Activated T-helper 2 cell treated with anti-CD3 and anti-CD28 coated beads, Interferon-gamma antibody, Interleukin-2, Interleukin-4, amounts not matched to agents 10 μg/mL and 5 μg/mL and 100 μg/mL, durations not matched to agents 14 hours and 24 hours and 36 hours (primary cell): ENCODE measurements at regions of chr1 and their contacts with region 1.

Region 1: GRCh38 chr1:209747580-209748262 is 8.1 kb upstream of the TRAF3IP3 start:
- DNase-seq: peak; percentile 79
- H3K4me3 Mint-ChIP-seq: peak overlapping the region; percentile 72
- H3K27ac Mint-ChIP-seq: peak overlapping the region; percentile 92
- H3K4me1 Mint-ChIP-seq: peaks cover 68% of the 10 kb centered on the region
- H3K27me3 Mint-ChIP-seq: no peaks in the 10 kb centered on the region

Region 2: DNA sequence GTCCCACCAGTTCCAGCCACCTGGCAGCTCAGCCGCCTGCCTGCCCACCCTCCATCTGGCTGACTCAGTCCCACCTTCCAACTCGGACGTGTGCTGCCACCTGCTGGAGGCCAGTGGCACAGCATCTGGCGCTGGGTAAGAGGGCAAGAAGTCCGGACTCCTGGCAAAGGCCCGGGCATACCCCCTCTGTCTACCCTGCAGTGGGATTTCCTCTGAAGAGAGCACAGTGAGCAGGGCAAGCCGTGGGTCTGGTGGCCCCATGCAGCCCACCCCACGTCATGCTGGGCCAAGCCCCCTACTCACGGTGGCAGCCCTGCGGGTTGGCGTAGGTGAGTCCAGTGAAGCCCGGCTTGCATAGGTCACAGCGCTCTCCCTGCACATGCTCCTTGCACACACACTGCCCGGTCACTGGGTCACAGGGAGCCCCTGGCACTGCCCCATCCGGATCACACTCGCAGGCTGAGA is 120.0 kb before region 1 on chr1:
- intact Hi-C with region 1: loop called (anchors 1 kb)
- DNase-seq: peak; percentile 63
- H3K4me3 Mint-ChIP-seq: no peak overlapping the region
- H3K27ac Mint-ChIP-seq: no peak overlapping the region
- H3K4me1 Mint-ChIP-seq: peaks cover 4% of the 10 kb centered on the region
- H3K27me3 Mint-ChIP-seq: peaks cover 2% of the 10 kb centered on the region

Region 3: DNA sequence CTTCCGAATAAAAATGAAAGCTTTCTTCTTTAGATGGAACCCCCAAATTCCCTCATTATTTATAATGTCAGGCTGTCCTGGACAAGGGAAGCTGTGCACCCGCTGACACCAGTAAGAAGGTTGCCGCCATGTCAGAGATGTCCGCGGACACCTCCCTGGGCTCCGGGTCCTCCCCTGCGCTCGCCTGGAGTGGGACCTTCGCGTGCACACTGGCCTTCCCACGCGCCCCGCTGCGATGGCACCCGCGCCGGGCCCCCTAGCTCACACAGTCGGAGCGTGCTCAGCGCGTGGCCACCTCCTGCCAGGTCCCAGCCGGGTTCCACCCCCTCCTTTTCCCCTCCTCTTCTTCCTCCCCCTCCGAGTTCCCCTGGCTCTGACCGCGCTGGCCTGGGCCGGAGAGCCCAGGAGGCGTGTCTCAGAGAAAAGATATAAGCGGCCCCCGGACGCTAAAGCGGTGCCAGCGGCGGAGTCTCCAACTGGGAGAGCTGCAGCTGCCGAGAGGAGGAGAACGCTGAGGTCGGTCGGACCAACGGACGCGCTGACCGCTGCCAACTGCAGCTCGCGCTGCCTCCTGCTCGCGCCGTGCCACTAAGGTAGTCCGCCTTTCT is 72.7 kb before region 1 on chr1 and contains the start of gene G0S2:
- intact Hi-C with region 1: loop called (anchors 1 kb)
- DNase-seq: no peak
- H3K4me3 Mint-ChIP-seq: peak within 1 kb of the TSS; percentile 72
- H3K27ac Mint-ChIP-seq: peak within 1 kb of the TSS; percentile 82
- H3K4me1 Mint-ChIP-seq: peaks cover 70% of the 10 kb centered on the region
- H3K27me3 Mint-ChIP-seq: peaks cover 28% of the 10 kb centered on the region
- total RNA-seq, gene G0S2: 49.3 and 49.4 TPM in 2 replicates

Region 4: DNA sequence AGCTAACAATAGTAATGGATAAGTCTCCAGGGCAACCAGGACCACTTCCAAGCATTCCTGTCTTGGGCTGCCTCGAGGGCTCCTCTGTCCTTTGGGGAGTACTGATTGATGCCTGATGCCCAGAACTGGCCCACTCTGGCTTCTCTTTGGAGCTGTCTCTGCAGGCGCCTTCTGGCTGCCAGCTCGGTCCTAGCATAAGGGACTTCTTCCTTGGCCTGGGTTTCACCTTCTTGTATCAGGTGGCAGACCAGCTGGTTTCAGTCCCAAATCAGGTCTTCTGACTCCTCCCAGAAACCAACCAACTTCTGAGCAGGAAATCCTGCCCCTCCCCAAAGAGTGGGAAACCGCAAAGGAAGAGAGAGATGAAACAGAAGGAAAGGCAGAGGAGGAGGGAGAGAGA is 61.9 kb before region 1 on chr1:
- intact Hi-C with region 1: no loop called
- DNase-seq: peak; percentile 31
- H3K4me3 Mint-ChIP-seq: peak overlapping the region; percentile 37
- H3K27ac Mint-ChIP-seq: no peak overlapping the region
- H3K4me1 Mint-ChIP-seq: peaks cover 28% of the 10 kb centered on the region
- H3K27me3 Mint-ChIP-seq: peaks cover 3% of the 10 kb centered on the region

Region 5: DNA sequence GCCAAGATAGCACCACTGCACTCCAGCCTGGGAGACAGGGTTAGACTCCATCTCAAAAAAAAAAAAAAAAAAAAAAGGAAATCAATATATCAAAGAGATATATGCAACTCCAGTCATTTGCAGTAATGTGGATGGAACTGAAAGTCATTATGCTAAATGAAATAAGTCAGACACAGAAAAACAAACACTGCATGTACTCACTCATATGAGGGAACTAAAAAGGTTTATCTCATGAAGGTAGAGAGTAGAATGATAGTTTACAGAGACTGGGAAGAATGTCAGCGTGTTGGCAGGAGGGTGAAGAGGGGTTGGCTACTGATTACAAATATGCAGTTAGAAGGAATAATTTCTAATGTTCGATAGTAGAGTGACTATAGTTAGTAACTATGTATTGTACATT is 29.9 kb before region 1 on chr1:
- intact Hi-C with region 1: loop called (anchors 1 kb)
- DNase-seq: no peak
- H3K4me3 Mint-ChIP-seq: no peak overlapping the region
- H3K27ac Mint-ChIP-seq: peak overlapping the region; percentile 92
- H3K4me1 Mint-ChIP-seq: peaks cover 66% of the 10 kb centered on the region
- H3K27me3 Mint-ChIP-seq: no peaks in the 10 kb centered on the region

Region 6: DNA sequence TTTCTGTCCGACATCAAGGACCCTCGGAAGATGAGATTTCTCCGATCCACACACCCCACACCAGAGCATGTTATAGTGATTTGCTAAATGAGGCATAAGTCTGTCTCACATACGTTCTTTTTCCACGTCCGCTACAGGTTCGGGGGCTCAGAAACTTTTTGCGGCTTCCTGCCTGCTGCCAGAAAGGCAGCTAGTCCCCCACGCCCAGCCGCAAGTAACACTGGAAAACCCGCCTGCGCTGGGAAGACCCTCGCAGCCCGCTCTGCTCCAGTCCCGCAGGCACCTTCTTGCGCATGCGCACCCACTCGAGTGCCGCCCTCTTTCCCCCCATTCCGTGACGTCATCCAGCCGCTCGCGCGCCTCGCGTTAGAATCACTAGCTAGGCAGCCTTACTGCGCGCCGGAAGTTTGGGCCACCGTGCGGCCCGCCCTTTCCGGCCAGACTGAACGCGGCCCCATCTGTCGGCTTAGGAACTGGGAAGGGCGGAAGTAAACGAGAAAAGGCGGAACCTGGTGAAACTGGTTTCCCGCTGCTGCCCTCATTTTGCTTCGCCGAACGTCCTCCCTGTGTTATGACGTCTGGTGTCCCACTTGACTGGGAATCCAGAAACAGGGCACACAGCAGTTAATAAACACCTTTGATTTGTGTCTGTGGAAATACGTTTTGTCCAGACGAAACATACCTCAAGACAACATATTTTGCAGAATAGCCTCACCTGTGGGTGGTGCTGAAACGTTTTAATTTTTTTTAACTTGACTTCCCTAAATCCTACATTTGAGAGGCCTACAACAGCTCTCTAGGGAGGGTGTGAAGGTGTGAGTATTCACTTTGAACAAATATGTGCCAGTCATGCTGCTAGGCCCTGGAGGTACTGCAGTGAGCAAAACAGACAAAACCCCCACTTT is 36.8 kb after region 1 on chr1 and contains the start of gene C1orf74:
- intact Hi-C with region 1: loop called (anchors 1 kb)
- DNase-seq: peak; percentile 99
- H3K4me3 Mint-ChIP-seq: peak within 1 kb of the TSS; percentile 87
- H3K27ac Mint-ChIP-seq: peak within 1 kb of the TSS; percentile 92
- H3K4me1 Mint-ChIP-seq: peaks cover 51% of the 10 kb centered on the region
- H3K27me3 Mint-ChIP-seq: no peaks in the 10 kb centered on the region
- total RNA-seq, gene C1orf74: 2.8 and 3.0 TPM in 2 replicates